ENCODE measurements at regions of chr1 and their contacts with region 1.

Region 1: GRCh38 chr1:23530747-23531561 is at the start of gene E2F2:
- DNase-seq: peak; percentile 94
- total RNA-seq, gene E2F2: 0.24 to 0.46 TPM

Region 2: GRCh38 chr1:22064751-22065402 is 1466.1 kb before region 1 on chr1:
- intact Hi-C with region 1: no loop called
- DNase-seq: no peak

Region 3: GRCh38 chr1:22131875-22132486 is 1399.0 kb before region 1 on chr1:
- intact Hi-C with region 1: loop called in 1 of 2 experiments (anchors 5 kb)
- DNase-seq: no peak

Region 4: DNA sequence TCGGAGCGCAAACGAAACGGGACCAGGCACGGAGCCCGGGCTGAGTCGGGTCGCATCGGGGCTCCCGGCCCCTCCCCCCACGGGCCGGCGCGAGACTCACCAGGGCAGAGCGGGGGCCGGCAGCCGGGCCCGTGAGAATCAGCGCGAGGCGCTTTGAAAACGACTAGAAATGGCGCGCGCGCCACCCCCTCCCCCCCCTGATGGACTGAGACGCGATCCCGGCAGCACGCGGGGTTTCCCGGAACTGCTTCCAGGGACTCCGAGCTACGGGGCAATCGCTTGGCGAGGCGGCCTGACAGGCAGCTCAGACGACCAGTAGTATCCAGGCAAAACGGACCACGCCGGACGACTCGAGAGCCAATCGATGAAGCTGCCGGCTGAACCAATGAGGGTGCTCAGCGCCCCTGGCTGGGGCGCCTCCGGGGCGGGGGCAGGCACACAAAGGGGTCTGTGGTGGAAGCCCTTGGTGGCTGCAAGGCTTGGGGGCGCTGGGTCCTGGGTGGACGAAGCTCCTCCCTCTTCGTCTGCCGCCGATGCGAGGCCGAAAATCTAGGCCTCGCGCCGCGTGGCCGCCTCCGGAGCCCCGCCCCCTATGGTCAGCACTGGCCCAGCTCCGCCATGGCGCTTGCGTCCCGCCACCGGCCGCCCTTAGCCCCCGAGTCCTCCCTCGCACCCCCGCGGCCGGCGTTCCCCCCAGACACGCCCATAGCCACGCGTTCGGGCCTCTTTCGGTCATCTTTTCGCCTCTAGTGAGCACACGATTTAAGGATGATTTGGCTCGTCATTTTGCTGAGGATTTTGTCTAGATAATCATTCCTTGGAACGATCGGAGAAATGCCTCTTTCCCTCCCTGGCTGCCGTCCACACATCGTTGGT is 186.6 kb before region 1 on chr1 and contains the start of gene HNRNPR:
- intact Hi-C with region 1: no loop called
- DNase-seq: peak; percentile 100
- total RNA-seq, gene HNRNPR: 95.1 to 117 TPM

Region 5: DNA sequence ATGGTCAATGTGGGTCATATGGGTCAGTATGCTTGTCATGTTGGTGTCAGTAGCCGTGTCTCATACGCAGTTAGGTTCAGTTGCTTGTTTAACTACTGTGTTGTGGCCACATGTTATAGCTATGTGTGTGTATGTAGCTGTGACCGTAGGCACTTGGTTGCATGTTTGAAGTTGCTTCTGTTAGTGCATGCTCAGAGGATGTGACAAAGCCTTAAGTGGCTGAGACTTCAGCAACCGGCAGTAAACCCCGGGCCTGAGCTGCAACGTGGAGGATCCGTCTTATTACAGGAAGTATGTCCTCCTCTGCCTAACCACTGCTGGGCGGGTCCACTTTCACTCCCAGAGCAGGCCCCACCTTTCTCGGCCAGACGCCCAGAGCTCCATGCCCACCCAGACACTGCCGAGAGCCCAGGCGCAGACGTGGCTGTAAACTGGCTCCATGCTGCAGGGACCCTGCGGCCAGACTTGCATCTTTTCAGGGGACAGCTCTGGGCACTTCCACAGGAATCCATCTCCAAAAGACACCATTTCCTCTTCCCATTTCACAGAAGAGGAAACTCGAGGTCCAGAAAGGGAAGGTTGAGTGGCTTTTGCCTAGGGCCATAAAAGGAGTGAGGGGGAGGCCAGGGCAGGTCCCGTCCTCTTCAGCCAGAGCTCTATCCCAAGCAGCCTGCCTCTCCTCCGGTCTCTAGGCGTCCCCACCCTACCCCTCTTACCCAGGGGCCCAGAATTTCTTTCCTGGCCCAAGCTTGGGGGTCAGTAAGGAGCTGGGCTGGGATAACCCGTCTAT is 108.5 kb before region 1 on chr1:
- intact Hi-C with region 1: no loop called
- DNase-seq: peak; percentile 93

Region 6: GRCh38 chr1:23496490-23497181 is 34.3 kb before region 1 on chr1:
- intact Hi-C with region 1: loop called in 1 of 2 experiments (anchors 5 kb)
- DNase-seq: no peak